Transverse colon (tissue), 4 donors: ENCODE measurements at regions of chr15 and their contacts with region 1.

Region 1: DNA sequence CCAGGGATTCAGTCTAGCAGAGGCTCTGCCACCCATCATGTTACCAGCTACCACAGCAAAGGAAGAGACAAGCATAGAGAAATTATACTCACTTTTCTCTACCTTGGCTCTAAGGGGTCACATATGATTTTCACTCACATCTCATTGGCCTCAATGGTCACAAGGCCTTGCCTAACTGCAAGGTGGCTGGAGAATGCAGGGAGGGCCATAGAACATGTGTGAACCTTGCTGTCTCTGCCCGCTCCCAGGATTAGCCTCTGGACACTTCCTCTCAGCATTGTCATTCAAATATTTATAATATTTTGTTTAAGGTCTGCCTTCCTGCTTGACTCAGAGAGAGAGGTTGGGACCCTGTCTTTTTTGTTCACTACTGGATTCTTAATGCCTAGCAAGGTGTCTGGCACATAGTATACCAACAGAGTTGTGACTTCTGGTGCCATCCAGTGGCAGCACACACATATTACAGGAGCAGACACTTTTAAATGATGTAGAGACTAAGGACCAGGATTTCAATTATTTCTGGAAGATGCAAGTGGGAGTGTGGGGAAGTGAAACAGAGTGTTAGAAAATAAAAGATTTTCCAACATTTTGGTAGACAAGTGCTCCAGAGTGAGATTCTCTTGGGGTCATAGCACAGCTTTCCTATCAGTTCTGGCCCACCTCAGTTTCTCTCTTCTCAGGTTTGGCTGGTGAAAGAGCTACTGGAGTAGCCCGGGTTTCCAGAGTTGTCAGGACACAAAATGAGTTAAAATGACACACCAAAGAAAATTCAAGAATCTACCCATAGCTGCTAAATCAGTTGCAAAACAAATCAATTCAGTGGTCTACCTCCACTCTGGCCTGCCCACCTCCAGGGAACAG is 119.0 kb upstream of the RASGRP1 start:
- DNase-seq: peak; percentile 70
- H3K4me3 ChIP-seq: no peak overlapping the region
- H3K27ac ChIP-seq: no peak overlapping the region
- H3K4me1 ChIP-seq: no peaks in the 10 kb centered on the region
- H3K27me3 ChIP-seq: no peaks in the 10 kb centered on the region
- CTCF ChIP-seq: peak; percentile 61 to 77 (median 75)
- EP300 ChIP-seq: no peak
- POLR2A ChIP-seq: no peak

Region 2: DNA sequence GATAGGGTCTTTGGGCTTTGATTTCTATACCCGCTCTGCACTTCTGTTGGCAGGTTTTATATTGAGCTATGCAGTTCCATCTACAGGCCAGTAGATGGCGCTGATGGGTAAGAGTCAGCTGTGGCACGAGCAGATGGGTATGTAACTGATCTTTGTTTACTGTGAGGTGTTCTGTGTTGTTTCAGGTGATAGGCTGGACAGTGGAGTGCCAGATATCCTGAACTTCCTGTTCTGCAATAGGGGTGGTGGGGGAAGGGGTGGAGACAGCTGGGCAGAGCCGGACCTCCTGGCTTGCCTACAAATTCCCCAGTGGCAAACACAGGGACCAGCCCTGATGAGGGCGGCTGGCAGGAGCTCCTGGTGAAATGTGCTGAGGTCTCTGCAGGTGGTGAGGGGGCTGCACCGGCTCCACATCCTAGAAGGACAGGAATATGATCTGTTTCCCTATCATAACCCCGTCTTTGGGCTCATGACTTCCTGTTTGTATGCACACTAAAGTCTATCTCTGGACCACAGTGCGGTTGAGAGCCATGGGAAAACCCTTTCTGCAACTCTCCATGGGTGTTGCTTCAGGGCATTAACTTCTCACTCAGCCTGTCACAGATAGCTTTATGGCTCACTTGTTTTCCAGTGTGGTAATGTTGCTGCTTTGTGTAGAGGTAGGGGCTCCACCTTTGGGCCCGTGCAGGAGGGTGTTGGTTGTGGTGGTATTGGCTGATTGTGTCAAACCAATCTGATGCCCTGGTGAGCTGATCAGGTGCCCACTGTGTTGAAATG is 243.1 kb before region 1 on chr15:
- in situ Hi-C with region 1: loop called in 1 of 4 experiments (anchors 25 kb)
- intact Hi-C with region 1: loop called (anchors 10 kb)
- DNase-seq: peak; percentile 33
- H3K4me3 ChIP-seq: no peak overlapping the region
- H3K27ac ChIP-seq: no peak overlapping the region
- H3K4me1 ChIP-seq: peaks cover 0 to 10% (median 2%) of the 10 kb centered on the region in 4 donors
- H3K27me3 ChIP-seq: peaks cover 29% of the 10 kb centered on the region
- CTCF ChIP-seq: peak; percentile 91 to 96 (median 93)
- EP300 ChIP-seq: no peak
- POLR2A ChIP-seq: no peak

Region 3: GRCh38 chr15:38474155-38474757 is 209.4 kb before region 1 on chr15:
- in situ Hi-C with region 1: loop called in 2 of 4 experiments (anchors 25 kb)
- intact Hi-C with region 1: loop called (anchors 10 kb)
- DNase-seq: no peak
- H3K4me3 ChIP-seq: no peak overlapping the region
- H3K27ac ChIP-seq: no peak overlapping the region
- H3K4me1 ChIP-seq: no peaks in the 10 kb centered on the region
- H3K27me3 ChIP-seq: no peaks in the 10 kb centered on the region
- CTCF ChIP-seq: peak; percentile 56 to 85 (median 61)
- EP300 ChIP-seq: no peak
- POLR2A ChIP-seq: no peak

Region 4: DNA sequence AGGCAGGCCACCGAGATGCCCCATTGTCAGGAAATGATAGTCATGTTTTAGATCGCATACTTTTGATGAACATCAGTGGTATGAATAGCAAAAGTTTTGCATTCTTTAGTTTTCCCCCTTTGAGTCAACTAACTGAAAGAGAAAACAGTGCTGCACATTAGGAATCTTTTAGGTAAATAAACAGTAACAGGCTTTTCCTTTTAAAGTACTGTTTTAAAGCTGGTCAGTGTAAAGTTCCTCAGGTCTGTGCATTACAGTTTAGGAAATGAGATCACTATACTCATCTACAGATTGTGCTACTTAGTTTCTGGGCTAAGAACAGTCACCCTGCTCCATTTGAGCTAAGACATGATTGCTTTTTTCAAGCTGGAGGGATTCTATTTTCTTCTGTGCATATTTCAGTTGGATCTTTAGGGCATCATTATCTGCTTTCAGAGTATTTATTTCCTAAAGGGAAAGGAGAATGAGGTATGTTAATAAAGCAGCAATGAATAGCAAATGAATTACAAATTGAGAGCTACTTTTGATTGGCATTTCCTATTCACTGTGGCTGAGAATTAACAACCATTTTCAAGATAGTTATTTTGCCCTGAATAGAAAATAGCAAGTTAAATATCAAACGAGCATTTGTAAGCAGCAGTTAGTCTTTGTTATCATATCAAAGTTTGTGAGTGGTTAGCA is 193.2 kb before region 1 on chr15:
- in situ Hi-C with region 1: loop called in 2 of 4 experiments (anchors 10 to 25 kb)
- intact Hi-C with region 1: no loop called
- DNase-seq: no peak
- H3K4me3 ChIP-seq: no peak overlapping the region
- H3K27ac ChIP-seq: no peak overlapping the region
- H3K4me1 ChIP-seq: no peaks in the 10 kb centered on the region
- H3K27me3 ChIP-seq: no peaks in the 10 kb centered on the region
- CTCF ChIP-seq: no peak
- EP300 ChIP-seq: no peak
- POLR2A ChIP-seq: no peak

Region 5: DNA sequence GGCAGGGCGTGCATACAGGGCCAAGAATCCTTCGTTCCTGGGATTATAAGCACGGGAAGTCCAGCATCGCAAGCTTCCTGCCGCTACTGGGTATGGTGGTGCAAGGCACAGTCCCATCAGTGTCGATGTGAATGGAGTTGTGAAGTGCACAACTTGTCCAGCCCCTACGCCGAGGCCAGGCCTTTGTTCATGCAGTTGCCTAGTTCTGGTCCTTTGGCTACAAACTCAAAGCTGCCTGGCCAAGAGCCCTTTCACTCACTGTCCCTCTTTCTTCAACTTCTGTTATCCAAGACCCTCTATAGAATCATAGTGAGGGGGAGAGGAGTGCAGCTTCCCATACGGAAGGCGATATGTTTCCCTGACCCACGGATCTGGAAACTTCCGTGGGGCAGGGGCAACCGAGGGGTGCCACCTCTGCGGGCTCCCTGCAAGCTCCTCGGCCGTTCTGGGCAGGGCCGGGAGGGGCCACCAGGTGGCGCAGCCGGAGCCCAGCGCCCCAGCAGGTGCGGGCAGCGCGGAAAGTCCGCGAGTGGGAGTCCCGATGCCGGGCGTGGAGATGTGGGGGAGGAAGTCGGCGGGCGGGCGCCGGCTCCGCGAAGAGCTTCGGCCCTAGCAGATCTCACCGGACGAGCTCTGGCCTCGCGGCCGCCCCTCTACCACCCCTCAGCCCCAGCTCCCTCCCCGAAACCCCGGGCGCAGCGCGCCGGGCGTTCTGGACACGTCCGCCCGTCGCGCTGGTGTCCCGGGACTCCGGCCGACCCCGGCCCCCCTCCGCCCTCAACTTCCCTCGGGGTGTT is 119.7 kb before region 1 on chr15:
- in situ Hi-C with region 1: loop called in 1 of 4 experiments (anchors 10 kb)
- intact Hi-C with region 1: no loop called
- DNase-seq: peak; percentile 79
- H3K4me3 ChIP-seq: peak overlapping the region; percentile 53 to 85 (median 58)
- H3K27ac ChIP-seq: peak overlapping the region; percentile 62 to 72 (median 70)
- H3K4me1 ChIP-seq: peaks cover 0 to 13% (median 7%) of the 10 kb centered on the region in 4 donors
- H3K27me3 ChIP-seq: peaks cover 19% of the 10 kb centered on the region
- CTCF ChIP-seq: peak; percentile 76 to 95 (median 88)
- EP300 ChIP-seq: no peak
- POLR2A ChIP-seq: no peak